Activated CD4-positive, alpha-beta T cell treated with anti-CD3 and anti-CD28 coated beads for 36 hours (primary cell): ENCODE measurements at regions of chr14 and their contacts with region 1.

Region 1: GRCh38 chr14:45083971-45084722 is at the start of gene PRPF39:
- DNase-seq: peak; percentile 97
- ATAC-seq: peak; percentile 96
- H3K4me3 Mint-ChIP-seq: peak within 1 kb of the TSS; percentile 93
- H3K27ac Mint-ChIP-seq: peak within 1 kb of the TSS; percentile 97
- H3K4me1 Mint-ChIP-seq: peaks cover 45% of the 10 kb centered on the region
- H3K27me3 Mint-ChIP-seq: no peaks in the 10 kb centered on the region
- total RNA-seq, gene PRPF39: 45.2 to 47.5 TPM

Region 2: GRCh38 chr14:44961604-44962333 is 122.4 kb before region 1 on chr14 and contains the starts of genes KLHL28 and TOGARAM1:
- CTCF ChIA-PET with region 1: no interaction called
- POLR2A ChIA-PET with region 1: interaction called, 3 read pairs
- intact Hi-C with region 1: loop called (anchors 1 kb)
- DNase-seq: peak; percentile 96
- ATAC-seq: peak; percentile 94
- H3K4me3 Mint-ChIP-seq: no peak within 1 kb of the TSS
- H3K27ac Mint-ChIP-seq: no peak within 1 kb of the TSS
- H3K4me1 Mint-ChIP-seq: peaks cover 51% of the 10 kb centered on the region
- H3K27me3 Mint-ChIP-seq: no peaks in the 10 kb centered on the region
- total RNA-seq, gene KLHL28: 11.3 to 12.3 TPM
- total RNA-seq, gene TOGARAM1: 5.7 to 6.6 TPM

Region 3: GRCh38 chr14:45038865-45039264 is 45.3 kb before region 1 on chr14:
- CTCF ChIA-PET with region 1: no interaction called
- POLR2A ChIA-PET with region 1: no interaction called
- intact Hi-C with region 1: no loop called
- DNase-seq: no peak
- ATAC-seq: no peak
- H3K4me3 Mint-ChIP-seq: no peak overlapping the region
- H3K27ac Mint-ChIP-seq: no peak overlapping the region
- H3K4me1 Mint-ChIP-seq: no peaks in the 10 kb centered on the region
- H3K27me3 Mint-ChIP-seq: no peaks in the 10 kb centered on the region